ENCODE measurements at regions of chr4 and their contacts with region 1.

Region 1: GRCh38 chr4:131388277-131388676 is 1760.8 kb upstream of the PCDH10 start:
- DNase-seq: no peak
- ATAC-seq: no peak
- H3K4me3 ChIP-seq: no peak overlapping the region
- H3K27ac ChIP-seq: no peak overlapping the region
- H3K4me1 ChIP-seq: no peaks in the 10 kb centered on the region
- H3K27me3 ChIP-seq: no peaks in the 10 kb centered on the region

Region 2: DNA sequence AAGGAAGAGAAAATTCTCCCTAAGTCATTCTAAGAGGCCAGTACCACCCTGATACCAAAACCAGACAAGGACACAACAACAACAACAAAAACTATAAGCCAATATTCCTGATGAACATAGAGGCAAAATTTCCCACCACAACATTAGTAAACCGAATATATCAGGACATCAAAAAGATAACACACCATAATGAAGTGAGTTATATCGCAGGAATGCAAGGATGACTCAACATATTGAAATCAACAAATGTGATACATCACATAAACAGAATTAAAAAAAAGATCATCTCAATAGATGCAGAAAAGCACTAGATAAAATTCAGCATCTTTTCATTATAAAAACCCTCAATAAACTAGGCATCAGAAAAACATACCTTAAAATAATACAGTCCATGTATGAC is 83.6 kb before region 1 on chr4:
- intact Hi-C with region 1: no loop called
- DNase-seq: no peak
- ATAC-seq: no peak
- H3K4me3 ChIP-seq: no peak overlapping the region
- H3K27ac ChIP-seq: no peak overlapping the region
- H3K4me1 ChIP-seq: no peaks in the 10 kb centered on the region
- H3K27me3 ChIP-seq: no peaks in the 10 kb centered on the region

Region 3: DNA sequence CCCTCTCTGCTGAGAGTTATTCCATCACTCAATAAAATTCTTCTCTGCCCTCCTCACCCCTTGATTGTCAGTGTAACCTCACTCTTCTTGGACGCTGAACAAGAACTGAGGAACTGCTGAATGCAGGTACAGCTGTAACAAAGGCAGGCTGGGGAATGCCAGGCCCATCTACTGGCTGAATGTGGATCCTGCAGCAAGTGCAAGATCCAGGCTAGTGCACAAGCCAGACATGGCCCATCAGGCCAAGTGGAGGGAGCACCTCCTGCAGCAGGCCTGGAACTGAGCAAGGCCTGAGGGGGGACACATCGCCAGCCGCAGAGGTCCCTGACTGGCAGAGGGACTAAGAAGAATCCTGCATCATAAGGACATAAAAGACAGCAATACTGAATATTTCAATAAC is 1349.1 kb after region 1 on chr4:
- intact Hi-C with region 1: loop called in 1 of 2 experiments (anchors 10 kb)
- DNase-seq: no peak
- ATAC-seq: no peak
- H3K4me3 ChIP-seq: no peak overlapping the region
- H3K27ac ChIP-seq: no peak overlapping the region
- H3K4me1 ChIP-seq: no peaks in the 10 kb centered on the region
- H3K27me3 ChIP-seq: no peaks in the 10 kb centered on the region